Endothelial cell of umbilical vein (primary cell): ENCODE measurements at regions of chr9 and their contacts with region 1.

Region 1: DNA sequence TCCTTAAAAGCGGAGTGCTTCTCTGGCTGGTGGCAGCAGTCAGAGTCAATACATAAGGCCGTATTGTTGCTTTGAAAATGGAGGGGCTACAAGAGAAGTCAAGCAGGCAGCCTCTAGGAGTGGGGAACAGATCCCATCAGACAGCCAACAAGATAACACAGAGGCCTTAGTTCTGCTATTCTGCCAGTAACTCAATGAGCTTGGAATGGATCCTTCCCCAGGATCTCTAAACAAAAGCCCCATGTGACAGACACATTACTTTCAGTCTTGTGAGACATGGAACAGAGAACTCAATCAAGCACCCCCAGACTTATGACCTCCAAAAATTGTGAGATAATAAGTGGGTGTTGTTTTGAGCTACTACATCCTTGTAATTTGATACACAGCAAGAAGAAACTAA is 158.6 kb downstream of the RFX3 start:
- DNase-seq: no peak
- H3K4me3 ChIP-seq: no peak overlapping the region
- H3K27ac ChIP-seq: no peak overlapping the region
- H3K4me1 ChIP-seq: no peaks in the 10 kb centered on the region
- H3K27me3 ChIP-seq: no peaks in the 10 kb centered on the region
- CTCF ChIP-seq: no peak
- POLR2A ChIP-seq: no peak

Region 2: GRCh38 chr9:3299872-3300271 is 67.3 kb before region 1 on chr9:
- CTCF ChIA-PET with region 1: no interaction called
- POLR2A ChIA-PET with region 1: no interaction called
- dilution Hi-C with region 1: no loop called
- intact Hi-C with region 1: loop called (anchors 10 kb)
- DNase-seq: no peak
- H3K4me3 ChIP-seq: no peak overlapping the region
- H3K27ac ChIP-seq: no peak overlapping the region
- H3K4me1 ChIP-seq: no peaks in the 10 kb centered on the region
- H3K27me3 ChIP-seq: no peaks in the 10 kb centered on the region
- CTCF ChIP-seq: no peak
- POLR2A ChIP-seq: no peak

Region 3: GRCh38 chr9:3660936-3661335 is 293.8 kb after region 1 on chr9:
- CTCF ChIA-PET with region 1: no interaction called
- POLR2A ChIA-PET with region 1: no interaction called
- dilution Hi-C with region 1: no loop called
- intact Hi-C with region 1: no loop called
- DNase-seq: no peak
- H3K4me3 ChIP-seq: no peak overlapping the region
- H3K27ac ChIP-seq: no peak overlapping the region
- H3K4me1 ChIP-seq: no peaks in the 10 kb centered on the region
- H3K27me3 ChIP-seq: peaks cover 2 to 4% of the 10 kb centered on the region in 2 experiments
- CTCF ChIP-seq: no peak
- POLR2A ChIP-seq: no peak